ENCODE measurements at regions of chr17 and their contacts with region 1.

Region 1: GRCh38 chr17:27236717-27237315 is 57.1 kb upstream of the WSB1 start:
- DNase-seq: peak; percentile 55 to 87 (median 70)
- ATAC-seq: peak; percentile 91
- H3K4me3 ChIP-seq: no peak overlapping the region
- H3K4me3 Mint-ChIP-seq: no peak overlapping the region
- H3K27ac ChIP-seq: no peak overlapping the region
- H3K27ac Mint-ChIP-seq: no peak overlapping the region
- H3K4me1 ChIP-seq: no peaks in the 10 kb centered on the region
- H3K4me1 Mint-ChIP-seq: no peaks in the 10 kb centered on the region
- H3K27me3 ChIP-seq: no peaks in the 10 kb centered on the region
- H3K27me3 Mint-ChIP-seq: no peaks in the 10 kb centered on the region
- CTCF ChIP-seq: peak; percentile 78

Region 2: DNA sequence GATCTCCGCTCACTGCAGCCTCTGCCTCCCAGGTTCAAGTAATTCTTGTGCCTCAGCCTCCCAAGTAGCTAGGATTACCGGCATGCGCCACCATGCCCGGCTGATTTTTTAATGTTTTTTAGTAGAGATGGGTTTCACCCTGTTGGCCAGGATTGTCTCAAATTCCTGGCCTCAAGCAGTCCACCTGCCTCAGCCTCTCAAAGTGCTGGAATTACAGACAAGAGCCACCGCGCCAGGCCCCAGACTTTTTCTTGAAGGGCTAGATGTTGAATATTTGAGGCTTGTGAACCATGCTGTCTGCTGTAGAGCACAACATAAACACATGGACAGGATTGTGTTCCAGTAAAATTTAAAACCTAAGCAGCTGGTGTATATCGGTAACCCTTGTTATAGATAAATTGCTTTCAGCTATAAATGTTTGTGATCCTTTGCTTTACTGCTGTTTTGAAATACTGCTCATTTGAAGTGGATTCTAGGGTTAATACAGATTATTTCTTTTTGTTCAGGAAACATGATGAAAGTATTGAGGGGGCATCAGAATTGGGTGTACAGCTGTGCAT is 69.5 kb after region 1 on chr17:
- CTCF ChIA-PET with region 1: interaction called, 6 read pairs
- POLR2A ChIA-PET with region 1: no interaction called
- intact Hi-C with region 1: loop called in 1 of 2 experiments (anchors 5 kb)
- DNase-seq: no peak
- ATAC-seq: no peak
- H3K4me3 ChIP-seq: no peak overlapping the region
- H3K4me3 Mint-ChIP-seq: no peak overlapping the region
- H3K27ac ChIP-seq: no peak overlapping the region
- H3K27ac Mint-ChIP-seq: no peak overlapping the region
- H3K4me1 ChIP-seq: peaks cover 7% of the 10 kb centered on the region
- H3K4me1 Mint-ChIP-seq: peaks cover 31% of the 10 kb centered on the region
- H3K27me3 ChIP-seq: no peaks in the 10 kb centered on the region
- H3K27me3 Mint-ChIP-seq: no peaks in the 10 kb centered on the region
- CTCF ChIP-seq: no peak

Region 3: DNA sequence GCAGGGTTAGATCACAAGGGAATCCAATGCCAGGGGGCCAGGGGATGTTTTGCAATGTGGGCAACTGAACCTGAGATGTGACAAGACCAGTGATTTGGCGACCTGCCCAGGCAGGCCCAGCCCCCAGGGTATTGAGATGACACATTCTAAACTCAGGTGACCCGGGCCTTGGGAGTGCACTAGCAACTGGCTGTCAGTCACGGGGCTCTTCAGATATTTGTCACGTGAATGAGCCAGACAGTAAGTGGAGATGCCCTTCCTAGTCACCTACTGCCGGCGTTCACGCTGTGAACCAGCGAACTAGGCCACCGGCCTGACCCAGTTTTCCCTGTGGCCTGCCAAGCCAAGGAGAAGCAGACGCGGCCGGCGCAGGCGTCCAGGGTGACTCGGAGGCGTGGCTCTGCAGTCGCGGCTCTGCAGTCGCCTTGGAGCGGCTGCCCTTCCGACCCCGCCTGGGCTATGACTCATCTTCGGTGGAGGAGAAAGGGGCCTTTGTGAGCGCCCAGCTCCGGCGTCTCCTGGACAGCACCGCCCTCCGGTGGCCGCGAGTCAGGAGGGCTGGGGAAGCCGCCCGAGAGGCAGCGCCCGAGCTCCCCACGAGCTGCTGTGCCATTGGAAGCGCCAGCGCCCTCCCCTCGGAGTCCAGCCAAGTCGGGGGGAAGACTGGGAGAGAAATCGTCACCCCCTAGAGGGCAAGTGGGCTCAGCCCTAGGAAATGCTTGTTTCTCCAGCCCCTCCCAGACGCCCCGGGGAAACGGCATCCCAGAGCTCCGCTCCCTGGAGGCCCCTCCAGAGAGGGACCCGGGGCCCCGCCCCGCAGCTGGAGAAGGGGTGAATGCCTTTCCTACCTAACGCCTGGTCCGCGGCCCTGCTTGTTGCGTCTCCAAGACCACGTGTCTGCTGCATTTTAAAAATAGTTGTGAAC is 95.9 kb after region 1 on chr17:
- CTCF ChIA-PET with region 1: interaction called, 75 read pairs
- POLR2A ChIA-PET with region 1: interaction called, 26 read pairs
- intact Hi-C with region 1: loop called (anchors 1 kb)
- DNase-seq: peak; percentile 73 to 95 (median 88)
- ATAC-seq: peak; percentile 84
- H3K4me3 ChIP-seq: peak overlapping the region; percentile 64
- H3K4me3 Mint-ChIP-seq: peak overlapping the region; percentile 88
- H3K27ac ChIP-seq: peak overlapping the region in 1 of 2 donors; percentile 76
- H3K27ac Mint-ChIP-seq: peak overlapping the region; percentile 88
- H3K4me1 ChIP-seq: peaks cover 19% of the 10 kb centered on the region
- H3K4me1 Mint-ChIP-seq: peaks cover 26% of the 10 kb centered on the region
- H3K27me3 ChIP-seq: no peaks in the 10 kb centered on the region
- H3K27me3 Mint-ChIP-seq: no peaks in the 10 kb centered on the region
- CTCF ChIP-seq: peak; percentile 74

Region 4: DNA sequence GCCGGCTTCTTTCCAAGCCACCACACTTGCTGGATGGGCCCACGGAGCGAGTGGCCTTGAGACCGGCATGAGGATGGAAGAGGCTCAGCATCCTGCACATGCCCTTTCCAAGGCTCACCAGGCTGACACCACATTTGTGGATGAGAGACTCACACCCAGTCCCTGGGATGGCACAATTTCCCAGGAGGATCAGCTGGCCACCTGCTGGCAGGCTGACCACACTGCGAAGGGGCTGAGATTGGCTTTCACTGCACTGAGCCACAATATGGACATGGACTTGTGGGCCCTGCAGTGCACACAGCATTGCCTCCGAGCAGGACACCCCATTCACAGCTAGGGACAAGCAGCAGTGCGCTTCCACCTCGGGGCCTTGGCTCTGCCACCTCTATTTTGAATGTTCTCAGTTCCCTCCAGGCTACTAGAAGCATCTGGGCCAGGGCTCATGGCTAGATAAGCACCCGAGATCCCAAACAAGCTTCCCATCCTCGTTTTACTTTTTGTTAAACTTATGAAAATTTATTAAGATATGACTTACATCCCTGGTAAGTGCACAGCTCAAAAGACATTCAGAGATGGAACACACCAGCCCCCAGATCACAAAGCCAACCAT is 194.2 kb after region 1 on chr17:
- CTCF ChIA-PET with region 1: no interaction called
- POLR2A ChIA-PET with region 1: no interaction called
- intact Hi-C with region 1: no loop called
- DNase-seq: peak in 3 of 14 experiments; percentile 12 to 36 (median 22)
- ATAC-seq: no peak
- H3K4me3 ChIP-seq: no peak overlapping the region
- H3K4me3 Mint-ChIP-seq: no peak overlapping the region
- H3K27ac ChIP-seq: no peak overlapping the region
- H3K27ac Mint-ChIP-seq: no peak overlapping the region
- H3K4me1 ChIP-seq: no peaks in the 10 kb centered on the region
- H3K4me1 Mint-ChIP-seq: no peaks in the 10 kb centered on the region
- H3K27me3 ChIP-seq: no peaks in the 10 kb centered on the region
- H3K27me3 Mint-ChIP-seq: no peaks in the 10 kb centered on the region
- CTCF ChIP-seq: no peak

Region 5: DNA sequence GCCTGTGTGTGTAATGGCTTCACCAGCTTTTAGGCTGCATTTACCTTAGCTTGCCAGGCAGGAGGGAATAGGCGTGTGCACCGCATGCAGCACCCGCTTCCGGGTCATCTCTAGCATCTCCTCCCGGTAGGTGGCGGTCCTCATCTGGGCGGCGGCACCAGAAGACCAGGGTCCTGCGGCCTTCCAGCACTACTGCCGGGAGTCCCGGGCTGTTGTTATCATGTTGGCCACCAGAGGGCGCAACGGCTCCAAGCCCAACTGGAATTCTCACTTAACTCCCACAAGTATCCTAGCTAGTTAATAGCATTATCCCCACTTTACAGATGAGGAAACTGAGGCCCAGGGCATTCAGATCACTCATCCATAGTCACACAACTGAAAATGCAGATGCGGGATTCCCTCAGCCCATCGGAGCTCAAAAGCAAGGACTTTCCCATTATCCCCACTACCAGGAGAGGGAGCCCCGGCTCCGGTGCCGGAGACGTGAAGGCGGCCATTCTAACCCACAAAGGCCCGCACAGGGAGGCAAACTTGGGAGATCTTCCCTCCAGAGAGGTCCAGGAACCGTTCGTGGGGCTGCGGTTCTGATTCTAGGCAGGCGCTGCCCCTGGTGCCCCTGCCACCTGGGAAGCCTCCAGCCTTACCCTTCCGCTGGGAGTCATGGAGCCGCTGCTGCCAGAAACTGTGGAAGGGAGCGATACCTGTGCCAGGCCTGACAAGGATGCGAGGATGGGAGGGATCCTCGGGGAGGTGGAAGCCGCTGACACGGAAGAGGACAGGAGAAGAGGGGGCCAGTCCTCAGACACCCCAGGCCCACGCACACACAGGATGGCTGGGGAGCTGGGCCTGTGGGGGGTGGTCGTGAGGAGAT is 418.1 kb after region 1 on chr17:
- CTCF ChIA-PET with region 1: interaction called, 12 read pairs
- POLR2A ChIA-PET with region 1: interaction called, 3 read pairs
- intact Hi-C with region 1: loop called (anchors 1 to 5 kb)
- DNase-seq: peak; percentile 40 to 81 (median 55)
- ATAC-seq: peak; percentile 69
- H3K4me3 ChIP-seq: no peak overlapping the region
- H3K4me3 Mint-ChIP-seq: no peak overlapping the region
- H3K27ac ChIP-seq: no peak overlapping the region
- H3K27ac Mint-ChIP-seq: no peak overlapping the region
- H3K4me1 ChIP-seq: peaks cover 9% of the 10 kb centered on the region
- H3K4me1 Mint-ChIP-seq: peaks cover 9% of the 10 kb centered on the region
- H3K27me3 ChIP-seq: no peaks in the 10 kb centered on the region
- H3K27me3 Mint-ChIP-seq: peaks cover 5% of the 10 kb centered on the region
- CTCF ChIP-seq: peak; percentile 97